ENCODE measurements at regions of chr6 and their contacts with region 1.

Region 1: DNA sequence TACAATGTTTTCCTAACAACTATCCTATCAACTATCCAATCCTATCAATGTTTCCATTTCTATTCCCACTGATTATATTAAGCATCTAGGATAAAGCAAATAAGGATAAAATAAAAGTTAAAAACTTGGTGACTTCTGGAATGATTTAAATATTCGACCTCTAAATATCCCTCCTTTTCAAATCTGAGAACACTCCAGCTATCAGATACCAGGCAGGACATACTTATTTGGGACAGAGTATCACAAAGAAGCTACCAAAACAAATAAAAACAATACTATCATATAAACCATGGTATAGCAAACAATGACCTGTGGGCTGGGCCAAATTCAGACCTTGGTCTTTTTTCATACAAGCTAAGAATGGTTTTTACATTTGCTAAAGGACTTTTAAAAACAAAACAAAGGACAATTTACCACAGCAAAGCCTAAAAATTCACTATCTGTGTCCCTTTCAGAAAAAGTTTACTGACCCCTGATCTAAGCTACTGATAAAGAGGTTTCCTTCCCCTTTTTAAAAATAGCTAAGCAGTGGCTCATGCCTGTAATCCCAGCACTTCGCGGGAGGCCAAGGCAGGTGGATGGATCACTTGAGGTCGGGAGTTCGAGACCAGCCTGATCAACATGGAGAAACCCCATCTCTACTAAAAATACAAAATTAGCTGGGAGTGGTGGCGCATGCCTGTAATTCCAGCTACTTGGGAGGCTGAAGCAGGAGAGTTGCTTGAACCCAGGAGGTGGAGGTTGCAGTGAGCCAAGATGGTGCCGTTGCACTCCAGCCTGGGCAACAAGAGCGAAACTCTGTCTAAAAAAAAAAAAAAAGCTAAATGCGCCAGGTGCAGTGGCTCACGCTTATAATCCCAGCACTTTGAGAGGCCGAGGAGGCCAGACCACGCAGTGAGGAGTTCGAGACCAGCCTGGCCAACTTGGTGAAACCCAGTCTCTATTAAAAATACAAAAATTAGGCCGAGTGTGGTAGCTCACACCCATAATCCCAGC is 6.0 kb downstream of the NUP153 start:
- DNase-seq: no peak
- H3K4me3 ChIP-seq: no peak overlapping the region
- H3K27ac ChIP-seq: no peak overlapping the region
- H3K27me3 ChIP-seq: no peaks in the 10 kb centered on the region
- CTCF ChIP-seq: no peak

Region 2: GRCh38 chr6:17666646-17667045 is 34.1 kb before region 1 on chr6:
- intact Hi-C with region 1: loop called in 1 of 2 experiments (anchors 5 kb)
- DNase-seq: no peak
- H3K4me3 ChIP-seq: no peak overlapping the region
- H3K27ac ChIP-seq: peak overlapping the region in 28 of 59 donors; percentile 0 to 79 (median 37)
- H3K27me3 ChIP-seq: no peaks in the 10 kb centered on the region
- CTCF ChIP-seq: no peak

Region 3: DNA sequence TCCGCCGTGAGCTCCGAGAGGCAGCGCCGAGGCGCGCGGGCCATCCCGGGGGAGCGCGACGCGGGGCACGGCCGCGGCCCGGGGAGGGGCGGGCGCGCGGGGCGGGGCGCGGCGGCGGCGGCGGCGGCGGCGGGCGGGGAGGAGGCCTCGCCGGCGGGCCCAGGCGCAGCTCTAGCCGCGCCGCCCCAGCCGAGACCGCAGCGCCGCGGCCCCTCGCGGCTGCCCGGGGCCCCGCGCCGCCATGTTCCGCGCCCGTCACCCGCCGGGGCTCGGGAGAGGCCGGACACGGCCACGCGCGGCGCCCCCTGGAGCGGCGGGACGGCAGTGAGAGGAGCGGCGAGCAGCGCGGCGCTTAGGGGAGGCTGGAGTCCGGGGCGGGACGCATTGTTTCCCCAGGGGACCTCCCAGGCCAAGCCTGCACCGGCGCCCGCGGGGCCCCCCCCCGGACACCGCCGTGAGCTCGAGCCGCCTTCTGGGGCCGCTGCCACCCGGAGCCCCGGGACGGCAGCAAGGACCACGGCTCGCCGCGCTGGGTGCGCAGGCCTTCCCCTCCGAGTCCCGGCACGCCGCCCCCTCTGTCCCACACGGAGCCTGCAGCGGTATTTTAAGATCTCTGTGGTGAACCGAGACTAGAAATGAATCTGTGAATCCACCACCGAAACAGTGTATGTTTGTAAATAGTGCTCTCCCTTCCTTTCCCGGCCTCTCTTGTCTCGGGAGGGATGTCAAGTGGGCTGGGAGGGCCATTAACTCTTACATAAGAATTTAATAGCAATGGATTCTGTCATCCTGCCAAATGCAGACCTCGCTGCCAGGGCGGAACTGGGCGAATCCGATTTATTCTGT is 287.1 kb after region 1 on chr6 and contains the start of gene KIF13A:
- intact Hi-C with region 1: no loop called
- DNase-seq: peak; percentile 50 to 82 (median 66)
- H3K4me3 ChIP-seq: peak within 1 kb of the TSS; percentile 60 to 92 (median 79)
- H3K27ac ChIP-seq: peak within 1 kb of the TSS; percentile 91 to 100 (median 99)
- H3K27me3 ChIP-seq: no peaks in the 10 kb centered on the region
- CTCF ChIP-seq: peak in 36 of 56 donors; percentile 11 to 48 (median 30)
- total RNA-seq, gene KIF13A: 29.7 to 89.7 (median 51.6) TPM